Activated B cell treated with CpG ODN at 0.5 μM for 24 hours (primary cell): ENCODE measurements at regions of chr1 and their contacts with region 1.

Region 1: DNA sequence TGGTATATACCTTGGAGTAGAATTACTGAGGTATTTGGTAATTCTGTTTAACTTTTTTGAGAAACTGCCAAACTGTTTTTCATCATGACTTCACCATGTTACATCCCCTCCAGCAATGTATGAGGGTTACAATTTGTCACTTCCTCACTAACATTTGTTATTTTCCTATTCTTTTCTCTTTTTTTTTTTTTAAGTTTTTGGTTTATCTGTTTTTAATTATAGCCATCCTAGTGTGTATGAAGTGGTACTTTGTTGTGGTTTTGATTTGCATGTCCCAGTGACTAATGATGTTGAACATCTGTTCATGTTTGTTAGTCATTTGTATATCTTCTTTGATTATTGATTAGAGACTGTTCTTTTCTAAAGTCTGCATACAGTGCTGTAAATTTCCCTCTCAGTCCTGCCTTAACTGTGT is 147.3 kb downstream of the HS2ST1 start:
- DNase-seq: no peak
- ATAC-seq: peak; percentile 18
- H3K4me3 Mint-ChIP-seq: peak overlapping the region; percentile 47
- H3K27ac Mint-ChIP-seq: peak overlapping the region; percentile 90
- H3K4me1 Mint-ChIP-seq: peaks cover 87% of the 10 kb centered on the region
- H3K27me3 Mint-ChIP-seq: no peaks in the 10 kb centered on the region
- CTCF ChIP-seq: no peak

Region 2: DNA sequence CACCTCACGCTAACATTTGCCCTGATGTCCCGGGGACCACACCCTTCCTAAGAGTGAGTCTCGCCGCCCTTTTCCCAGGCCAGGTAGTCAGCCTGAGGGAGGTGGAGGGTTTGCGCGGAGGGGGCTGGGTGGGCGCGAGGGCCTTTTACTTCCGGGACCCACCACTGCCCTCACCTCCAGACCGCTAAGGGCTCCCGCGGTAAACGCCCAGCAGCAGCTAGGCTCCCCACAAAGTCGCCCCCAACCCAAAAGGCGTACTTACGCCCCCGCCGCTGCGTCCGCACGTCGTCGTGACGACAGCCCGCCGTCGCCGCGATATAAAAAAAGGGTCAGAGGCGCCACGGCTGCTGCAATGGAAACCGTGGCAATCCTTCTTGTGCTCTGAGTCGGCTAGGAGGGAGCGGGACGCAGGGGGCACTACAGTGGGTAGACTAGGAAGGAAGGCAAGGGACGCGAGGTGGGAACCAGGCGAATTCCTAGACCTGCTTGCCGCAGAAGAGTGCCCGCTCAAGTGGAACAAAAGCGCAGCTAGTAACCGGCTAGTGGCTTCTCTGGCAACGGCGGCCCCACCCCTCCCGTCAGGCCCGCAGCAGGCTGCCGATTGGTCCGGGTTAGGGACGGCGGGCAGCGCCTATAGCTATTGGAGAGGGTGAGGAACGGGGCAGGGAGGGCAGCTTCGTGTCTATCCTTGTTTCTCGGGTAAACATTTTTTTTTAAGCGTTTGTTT is 665.8 kb before region 1 on chr1 and contains the start of gene ODF2L:
- CTCF ChIA-PET with region 1: no interaction called
- POLR2A ChIA-PET with region 1: no interaction called
- intact Hi-C with region 1: loop called (anchors 10 kb)
- DNase-seq: peak; percentile 78
- ATAC-seq: peak; percentile 99
- H3K4me3 Mint-ChIP-seq: peak within 1 kb of the TSS; percentile 98
- H3K27ac Mint-ChIP-seq: peak within 1 kb of the TSS; percentile 95
- H3K4me1 Mint-ChIP-seq: peaks cover 45% of the 10 kb centered on the region
- H3K27me3 Mint-ChIP-seq: no peaks in the 10 kb centered on the region
- CTCF ChIP-seq: no peak
- total RNA-seq, gene ODF2L: 28.2 and 36.1 TPM in 2 replicates

Region 3: DNA sequence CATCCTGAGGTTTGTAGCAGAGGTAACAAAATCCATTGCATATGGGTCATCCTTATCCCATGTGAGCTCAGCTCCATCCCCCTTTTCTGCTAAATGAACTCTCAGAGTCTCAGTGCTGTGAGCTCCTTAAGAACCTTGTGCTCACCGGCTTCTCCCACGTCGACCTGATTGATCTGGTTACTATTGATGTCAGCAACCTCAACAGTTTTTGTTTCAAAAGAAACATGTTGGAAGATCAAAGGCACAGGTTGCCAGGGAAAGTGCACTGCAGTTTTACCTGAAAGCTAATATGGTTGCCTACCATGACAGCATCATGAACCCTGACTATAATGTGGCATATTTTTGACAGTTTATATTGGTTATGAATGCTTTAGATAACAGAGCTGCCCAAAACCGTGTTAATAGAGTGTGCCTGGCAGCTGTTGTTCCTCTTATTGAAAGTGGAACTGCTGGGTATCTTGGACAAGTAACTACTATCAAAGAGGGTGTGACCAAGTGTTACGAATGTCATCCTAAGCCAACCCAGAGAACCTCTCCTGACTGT is 15.9 kb before region 1 on chr1:
- CTCF ChIA-PET with region 1: no interaction called
- POLR2A ChIA-PET with region 1: interaction called, 4 read pairs
- intact Hi-C with region 1: loop called (anchors 1 kb)
- DNase-seq: no peak
- ATAC-seq: peak; percentile 78
- H3K4me3 Mint-ChIP-seq: peak overlapping the region; percentile 1
- H3K27ac Mint-ChIP-seq: peak overlapping the region; percentile 87
- H3K4me1 Mint-ChIP-seq: peaks cover 45% of the 10 kb centered on the region
- H3K27me3 Mint-ChIP-seq: no peaks in the 10 kb centered on the region
- CTCF ChIP-seq: no peak

Region 4: DNA sequence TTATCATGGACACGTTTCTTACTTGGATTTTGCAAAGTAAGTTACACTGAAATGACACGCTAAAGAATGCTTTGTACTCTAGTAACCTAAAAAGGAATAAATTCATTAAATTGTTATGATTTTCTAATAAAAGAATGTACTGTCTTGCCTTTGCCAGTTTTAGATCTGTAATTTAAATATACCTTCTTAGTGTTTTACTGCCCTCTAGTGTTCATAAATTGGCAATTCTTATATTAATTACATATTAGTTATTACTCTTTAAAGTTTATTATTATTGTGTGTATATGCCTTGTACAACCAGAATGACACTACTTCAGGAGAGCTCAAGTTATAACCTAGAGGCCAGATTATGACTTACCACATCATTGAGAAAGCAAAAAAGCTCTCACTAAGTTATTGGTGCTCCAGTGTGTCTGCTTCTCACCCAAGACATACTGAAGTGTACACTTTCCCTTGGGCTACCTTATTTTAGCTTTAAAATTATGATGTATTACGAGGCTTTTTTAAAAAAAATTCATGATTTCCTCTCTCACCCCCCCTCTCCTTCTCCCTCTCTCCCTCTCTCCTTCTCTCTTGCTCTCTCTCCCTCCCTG is 22.6 kb after region 1 on chr1:
- CTCF ChIA-PET with region 1: interaction called, 22 read pairs
- POLR2A ChIA-PET with region 1: interaction called, 5 read pairs
- intact Hi-C with region 1: loop called (anchors 2 kb)
- DNase-seq: no peak
- ATAC-seq: peak; percentile 28
- H3K4me3 Mint-ChIP-seq: no peak overlapping the region
- H3K27ac Mint-ChIP-seq: no peak overlapping the region
- H3K4me1 Mint-ChIP-seq: peaks cover 12% of the 10 kb centered on the region
- H3K27me3 Mint-ChIP-seq: no peaks in the 10 kb centered on the region
- CTCF ChIP-seq: peak; percentile 42

Region 5: GRCh38 chr1:87392248-87393192 is 330.8 kb after region 1 on chr1:
- CTCF ChIA-PET with region 1: no interaction called
- POLR2A ChIA-PET with region 1: no interaction called
- intact Hi-C with region 1: no loop called
- DNase-seq: no peak
- ATAC-seq: no peak
- H3K4me3 Mint-ChIP-seq: no peak overlapping the region
- H3K27ac Mint-ChIP-seq: no peak overlapping the region
- H3K4me1 Mint-ChIP-seq: peaks cover 25% of the 10 kb centered on the region
- H3K27me3 Mint-ChIP-seq: no peaks in the 10 kb centered on the region
- CTCF ChIP-seq: no peak

Region 6: GRCh38 chr1:87826681-87827251 is 765.0 kb after region 1 on chr1:
- CTCF ChIA-PET with region 1: no interaction called
- POLR2A ChIA-PET with region 1: no interaction called
- intact Hi-C with region 1: loop called (anchors 2 kb)
- DNase-seq: no peak
- ATAC-seq: peak; percentile 95
- H3K4me3 Mint-ChIP-seq: peak overlapping the region; percentile 44
- H3K27ac Mint-ChIP-seq: peak overlapping the region; percentile 65
- H3K4me1 Mint-ChIP-seq: peaks cover 43% of the 10 kb centered on the region
- H3K27me3 Mint-ChIP-seq: no peaks in the 10 kb centered on the region
- CTCF ChIP-seq: no peak